Mammary epithelial cell (primary cell): ENCODE measurements at regions of chr17 and their contacts with region 1.

Region 1: DNA sequence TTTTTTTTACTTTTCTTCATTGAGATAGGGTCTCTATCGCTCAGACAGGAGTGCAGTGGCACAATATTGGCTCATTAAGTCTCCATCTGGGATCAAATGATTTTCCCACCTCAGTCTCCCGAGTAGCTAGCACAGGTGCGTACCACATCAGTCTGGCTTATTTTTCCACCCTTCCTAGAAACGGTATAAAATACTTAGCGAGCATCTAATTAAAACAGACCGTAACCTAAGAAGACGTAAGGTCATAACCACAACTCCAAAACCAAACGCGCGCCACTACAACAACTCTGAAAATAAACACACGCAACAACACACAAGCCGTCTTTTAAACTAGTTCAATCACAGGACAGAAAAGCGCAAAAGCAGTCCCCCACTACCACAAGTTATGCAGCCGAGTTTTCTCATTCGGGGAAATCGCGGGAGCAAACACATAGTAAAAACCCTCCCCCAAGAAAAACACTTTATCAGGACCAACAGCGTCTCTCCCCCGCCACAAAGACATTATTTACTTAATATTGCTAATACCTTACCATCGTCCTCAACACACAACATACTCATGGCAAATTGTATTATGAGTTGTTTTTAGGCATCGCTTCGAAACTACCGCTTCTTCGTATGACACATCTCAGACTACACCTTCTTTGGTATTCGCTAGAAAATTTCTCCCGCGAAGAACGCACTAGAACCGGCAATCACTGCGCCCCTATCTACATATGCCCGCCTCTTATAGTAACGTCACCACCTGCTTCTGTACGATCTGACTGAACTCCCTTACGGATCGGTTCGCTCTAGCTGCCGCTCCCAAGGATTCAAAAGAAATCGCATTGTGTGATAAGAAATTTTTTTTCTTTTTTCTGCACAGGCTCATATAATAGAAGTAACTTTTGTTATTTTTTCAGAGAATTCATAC is 32.8 kb downstream of the TEX14 start:
- DNase-seq: peak; percentile 99
- H3K4me3 ChIP-seq: peak overlapping the region; percentile 22 to 40 (median 31)
- H3K27ac ChIP-seq: peak overlapping the region; percentile 99
- H3K4me1 ChIP-seq: no peaks in the 10 kb centered on the region
- H3K27me3 ChIP-seq: no peaks in the 10 kb centered on the region
- CTCF ChIP-seq: no peak

Region 2: DNA sequence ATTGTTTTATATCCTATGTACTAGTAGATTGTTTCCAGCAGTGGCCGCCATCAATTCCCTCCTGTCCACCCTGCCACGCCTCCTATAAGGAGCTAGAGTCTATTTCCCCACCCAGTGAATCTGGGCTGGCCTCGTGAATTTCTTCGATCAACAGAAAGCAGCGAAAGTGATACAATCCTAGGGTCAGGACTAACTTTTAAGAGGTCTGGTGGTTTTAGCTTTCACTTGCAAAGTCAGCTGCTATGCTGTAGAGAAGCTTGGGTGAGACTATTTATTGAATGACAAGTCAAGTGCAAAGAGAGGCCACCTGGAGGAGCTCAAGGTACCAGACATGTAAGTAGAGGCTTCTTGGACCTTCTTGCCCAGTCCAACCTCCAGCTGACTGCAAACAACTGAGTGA is 63.7 kb before region 1 on chr17:
- CTCF ChIA-PET with region 1: no interaction called
- dilution Hi-C with region 1: no loop called
- in situ Hi-C with region 1: no loop called
- intact Hi-C with region 1: no loop called
- DNase-seq: no peak
- H3K4me3 ChIP-seq: no peak overlapping the region
- H3K27ac ChIP-seq: no peak overlapping the region
- H3K4me1 ChIP-seq: no peaks in the 10 kb centered on the region
- H3K27me3 ChIP-seq: peaks cover 2% of the 10 kb centered on the region
- CTCF ChIP-seq: no peak

Region 3: DNA sequence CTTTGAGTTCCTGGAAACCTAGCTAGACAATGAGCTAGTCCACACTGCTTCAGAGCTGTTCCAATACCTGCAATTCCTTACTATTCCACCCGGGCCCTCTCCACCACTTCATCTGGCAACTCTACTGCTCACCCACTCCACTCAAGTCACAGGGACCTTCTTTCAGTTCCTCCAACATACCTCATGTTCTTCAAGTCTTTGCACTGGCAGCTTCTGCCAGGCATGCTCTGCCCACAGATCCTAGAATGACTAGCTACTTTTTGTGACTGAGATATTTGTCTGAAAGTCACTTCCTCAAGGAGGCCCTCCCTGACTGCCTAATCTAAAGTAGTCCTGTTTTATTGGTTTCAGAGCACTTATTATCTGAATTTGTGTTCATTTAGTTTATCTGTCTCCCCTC is 53.6 kb before region 1 on chr17:
- CTCF ChIA-PET with region 1: interaction called, 12 read pairs
- dilution Hi-C with region 1: no loop called
- in situ Hi-C with region 1: no loop called
- intact Hi-C with region 1: no loop called
- DNase-seq: no peak
- H3K4me3 ChIP-seq: no peak overlapping the region
- H3K27ac ChIP-seq: no peak overlapping the region
- H3K4me1 ChIP-seq: no peaks in the 10 kb centered on the region
- H3K27me3 ChIP-seq: no peaks in the 10 kb centered on the region
- CTCF ChIP-seq: no peak

Region 4: GRCh38 chr17:58679263-58680037 is 20.4 kb after region 1 on chr17:
- CTCF ChIA-PET with region 1: no interaction called
- dilution Hi-C with region 1: no loop called
- in situ Hi-C with region 1: no loop called
- intact Hi-C with region 1: loop called (anchors 1 kb)
- DNase-seq: peak; percentile 97
- H3K4me3 ChIP-seq: no peak overlapping the region
- H3K27ac ChIP-seq: peak overlapping the region; percentile 83
- H3K4me1 ChIP-seq: no peaks in the 10 kb centered on the region
- H3K27me3 ChIP-seq: no peaks in the 10 kb centered on the region
- CTCF ChIP-seq: no peak

Region 5: GRCh38 chr17:58692239-58693055 is 33.4 kb after region 1 on chr17 and contains the start of gene RAD51C:
- CTCF ChIA-PET with region 1: no interaction called
- dilution Hi-C with region 1: no loop called
- in situ Hi-C with region 1: no loop called
- intact Hi-C with region 1: loop called (anchors 1 kb)
- DNase-seq: peak; percentile 81
- H3K4me3 ChIP-seq: peak within 1 kb of the TSS; percentile 52 to 85 (median 74)
- H3K27ac ChIP-seq: peak within 1 kb of the TSS; percentile 76
- H3K4me1 ChIP-seq: peaks cover 11% of the 10 kb centered on the region
- H3K27me3 ChIP-seq: no peaks in the 10 kb centered on the region
- CTCF ChIP-seq: no peak
- total RNA-seq, gene RAD51C: 20.8 to 55.6 TPM